Calu3 (cell line): ENCODE measurements at regions of chr4 and their contacts with region 1.

Region 1: DNA sequence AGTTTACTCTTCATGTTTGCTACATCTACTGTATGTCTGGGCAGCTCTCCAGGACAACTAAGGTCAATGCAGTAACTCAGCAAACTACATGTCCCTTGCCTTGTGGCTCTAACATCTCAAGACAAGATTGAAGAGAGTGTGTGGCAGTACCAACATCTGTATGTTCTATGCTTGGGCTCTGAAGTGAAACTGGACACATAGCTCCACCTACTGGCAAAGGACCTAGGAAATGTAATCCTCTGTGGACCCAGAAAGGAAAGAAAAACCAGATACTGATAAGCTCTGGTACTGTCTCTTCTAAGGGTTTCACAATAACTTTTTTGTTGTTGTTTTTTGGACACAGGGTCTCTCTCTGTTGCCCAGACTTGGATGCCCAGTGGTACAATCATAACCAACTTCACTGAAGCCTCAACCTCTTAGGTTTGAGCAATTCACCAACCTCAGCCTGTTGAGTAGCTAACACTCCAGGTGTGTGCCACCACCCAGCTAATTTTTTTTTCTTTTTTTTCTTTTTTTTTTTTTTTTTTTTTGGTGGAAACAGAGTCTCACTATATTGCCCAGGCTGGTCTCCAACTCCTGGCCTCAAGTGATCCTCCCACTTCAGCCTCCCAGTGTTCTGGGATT is 64.1 kb downstream of the QDPR start:
- DNase-seq: peak; percentile 59
- H3K4me3 Mint-ChIP-seq: no peak overlapping the region
- H3K27ac Mint-ChIP-seq: no peak overlapping the region
- H3K4me1 Mint-ChIP-seq: no peaks in the 10 kb centered on the region
- H3K27me3 Mint-ChIP-seq: peaks cover 38% of the 10 kb centered on the region
- CTCF ChIP-seq: peak; percentile 42

Region 2: DNA sequence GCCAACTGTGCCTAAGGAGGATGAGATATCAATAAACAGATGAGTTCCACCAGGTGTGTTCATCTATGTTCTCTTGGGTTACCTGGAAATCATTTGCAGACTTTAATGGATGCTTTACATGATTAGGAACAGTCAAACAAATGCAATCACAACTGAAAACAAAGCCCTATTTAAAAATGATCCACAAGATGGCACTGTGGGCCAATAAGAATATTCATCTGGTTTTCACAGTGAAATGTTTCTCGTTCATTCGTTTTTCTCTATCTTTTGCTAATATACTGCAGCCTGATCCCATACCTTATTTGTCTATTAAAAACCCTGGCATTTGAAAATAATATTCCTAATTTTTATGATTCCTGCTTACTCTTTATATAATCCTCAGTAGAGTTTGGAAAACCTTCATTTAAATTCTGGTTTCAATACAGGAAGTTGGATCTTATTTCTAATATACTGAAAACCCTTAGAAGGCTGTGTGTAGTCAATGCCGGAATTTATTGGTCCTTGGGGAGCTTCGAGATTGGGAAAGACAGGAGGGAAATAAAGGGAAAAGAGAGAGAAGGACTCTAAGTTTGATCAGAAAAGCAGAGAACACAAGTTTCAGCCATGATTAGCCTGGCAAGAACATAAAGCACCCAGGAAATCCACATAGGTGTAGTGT is 1157.8 kb before region 1 on chr4:
- CTCF ChIA-PET with region 1: no interaction called
- intact Hi-C with region 1: loop called (anchors 5 kb)
- DNase-seq: no peak
- H3K4me3 Mint-ChIP-seq: no peak overlapping the region
- H3K27ac Mint-ChIP-seq: no peak overlapping the region
- H3K4me1 Mint-ChIP-seq: no peaks in the 10 kb centered on the region
- H3K27me3 Mint-ChIP-seq: no peaks in the 10 kb centered on the region
- CTCF ChIP-seq: peak; percentile 31

Region 3: DNA sequence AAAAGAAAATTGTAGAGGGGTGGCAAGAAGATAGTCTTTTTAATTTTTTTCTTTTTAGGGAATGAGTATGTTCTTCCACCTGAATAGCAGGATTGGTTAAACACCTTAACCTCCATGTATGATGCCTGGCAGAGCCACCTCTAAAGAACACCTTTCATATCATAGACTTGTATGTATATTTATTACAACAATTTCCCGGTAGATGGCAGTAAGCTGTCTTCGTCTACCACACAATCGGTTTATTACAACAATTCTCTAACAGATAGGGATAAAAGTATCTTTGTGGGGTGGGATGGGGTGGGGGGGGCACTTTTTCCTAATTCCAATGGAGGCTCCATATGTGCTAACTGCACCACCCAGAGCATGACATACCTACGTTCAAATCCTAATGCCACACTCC is 804.9 kb before region 1 on chr4:
- CTCF ChIA-PET with region 1: interaction called, 3 read pairs
- intact Hi-C with region 1: loop called (anchors 5 kb)
- DNase-seq: no peak
- H3K4me3 Mint-ChIP-seq: no peak overlapping the region
- H3K27ac Mint-ChIP-seq: no peak overlapping the region
- H3K4me1 Mint-ChIP-seq: no peaks in the 10 kb centered on the region
- H3K27me3 Mint-ChIP-seq: peaks cover 14% of the 10 kb centered on the region
- CTCF ChIP-seq: peak; percentile 6

Region 4: DNA sequence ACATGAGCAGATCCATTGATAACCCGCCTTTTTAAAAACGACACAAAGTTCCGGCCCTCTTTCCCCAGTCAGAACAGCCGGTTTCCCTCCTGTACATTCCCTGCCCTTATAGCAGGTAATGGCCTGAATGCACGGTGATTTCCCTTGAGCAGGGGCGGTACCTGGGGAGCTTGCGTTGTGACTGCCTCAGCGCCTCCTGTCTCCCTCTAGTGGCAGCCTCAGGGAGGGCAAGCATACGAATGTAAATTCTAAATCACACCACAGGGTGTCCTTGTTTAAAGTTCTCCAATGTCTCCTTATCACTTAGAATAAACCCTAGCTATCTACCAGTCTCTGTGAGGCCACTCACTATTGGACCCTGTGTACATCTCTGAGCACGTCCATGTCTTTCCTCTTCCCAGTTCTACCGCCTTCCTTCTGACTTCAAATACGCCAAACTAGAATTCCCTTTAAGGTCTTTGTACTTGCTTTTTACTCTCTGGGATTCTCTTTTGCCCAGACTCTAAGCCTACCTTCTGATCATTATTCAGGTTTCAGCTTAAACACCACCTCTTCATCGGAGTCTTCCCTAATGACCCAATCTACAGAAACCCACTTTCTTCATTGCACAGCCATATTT is 531.0 kb before region 1 on chr4:
- CTCF ChIA-PET with region 1: interaction called, 8 read pairs
- intact Hi-C with region 1: loop called (anchors 5 kb)
- DNase-seq: peak; percentile 74
- H3K4me3 Mint-ChIP-seq: no peak overlapping the region
- H3K27ac Mint-ChIP-seq: no peak overlapping the region
- H3K4me1 Mint-ChIP-seq: no peaks in the 10 kb centered on the region
- H3K27me3 Mint-ChIP-seq: no peaks in the 10 kb centered on the region
- CTCF ChIP-seq: peak; percentile 63

Region 5: GRCh38 chr4:17280261-17281018 is 167.3 kb before region 1 on chr4:
- CTCF ChIA-PET with region 1: no interaction called
- intact Hi-C with region 1: loop called (anchors 1 kb)
- DNase-seq: no peak
- H3K4me3 Mint-ChIP-seq: no peak overlapping the region
- H3K27ac Mint-ChIP-seq: no peak overlapping the region
- H3K4me1 Mint-ChIP-seq: no peaks in the 10 kb centered on the region
- H3K27me3 Mint-ChIP-seq: no peaks in the 10 kb centered on the region
- CTCF ChIP-seq: no peak

Region 6: GRCh38 chr4:17347445-17347844 is 100.3 kb before region 1 on chr4:
- CTCF ChIA-PET with region 1: interaction called, 10 read pairs
- intact Hi-C with region 1: loop called (anchors 1 kb)
- DNase-seq: peak; percentile 13
- H3K4me3 Mint-ChIP-seq: no peak overlapping the region
- H3K27ac Mint-ChIP-seq: no peak overlapping the region
- H3K4me1 Mint-ChIP-seq: no peaks in the 10 kb centered on the region
- H3K27me3 Mint-ChIP-seq: no peaks in the 10 kb centered on the region
- CTCF ChIP-seq: no peak